Activated B cell treated with CpG ODN at 0.5 μM for 24 hours (primary cell): ENCODE measurements at regions of chr9 and their contacts with region 1.

Region 1: GRCh38 chr9:37036776-37037502 is 2.9 kb upstream of the PAX5 start:
- DNase-seq: peak; percentile 65
- ATAC-seq: peak; percentile 31
- H3K4me3 Mint-ChIP-seq: peak overlapping the region; percentile 90
- H3K27ac Mint-ChIP-seq: peak overlapping the region; percentile 96
- H3K4me1 Mint-ChIP-seq: peaks cover 65% of the 10 kb centered on the region
- H3K27me3 Mint-ChIP-seq: no peaks in the 10 kb centered on the region
- CTCF ChIP-seq: no peak

Region 2: GRCh38 chr9:36833954-36834353 is 203.0 kb before region 1 on chr9:
- CTCF ChIA-PET with region 1: no interaction called
- POLR2A ChIA-PET with region 1: no interaction called
- intact Hi-C with region 1: no loop called
- DNase-seq: peak; percentile 13
- ATAC-seq: no peak
- H3K4me3 Mint-ChIP-seq: no peak overlapping the region
- H3K27ac Mint-ChIP-seq: peak overlapping the region; percentile 86
- H3K4me1 Mint-ChIP-seq: peaks cover 67% of the 10 kb centered on the region
- H3K27me3 Mint-ChIP-seq: no peaks in the 10 kb centered on the region
- CTCF ChIP-seq: no peak

Region 3: GRCh38 chr9:37079370-37080164 is 42.6 kb after region 1 on chr9:
- CTCF ChIA-PET with region 1: no interaction called
- POLR2A ChIA-PET with region 1: interaction called, 54 read pairs
- intact Hi-C with region 1: loop called (anchors 1 kb)
- DNase-seq: peak; percentile 78
- ATAC-seq: peak; percentile 93
- H3K4me3 Mint-ChIP-seq: peak overlapping the region; percentile 94
- H3K27ac Mint-ChIP-seq: peak overlapping the region; percentile 95
- H3K4me1 Mint-ChIP-seq: peaks cover 78% of the 10 kb centered on the region
- H3K27me3 Mint-ChIP-seq: no peaks in the 10 kb centered on the region
- CTCF ChIP-seq: no peak

Region 4: DNA sequence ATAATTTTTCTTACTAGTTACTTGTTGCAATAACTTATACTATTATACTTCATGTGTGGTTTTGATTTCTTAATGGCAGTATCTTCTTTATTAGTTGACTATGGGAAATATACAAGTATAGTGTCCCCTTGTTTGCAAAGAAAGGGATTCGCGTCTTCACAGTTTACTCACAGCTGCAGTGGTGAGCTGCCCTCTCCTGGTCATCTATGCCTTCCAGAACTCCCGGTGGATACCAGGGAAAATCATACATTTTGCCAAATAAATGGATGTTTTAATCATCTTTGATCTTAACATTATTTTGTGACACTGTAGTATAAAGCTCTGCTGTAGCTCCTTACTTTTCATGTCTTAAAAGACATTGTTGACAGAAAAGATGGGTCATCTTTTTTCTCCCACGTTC is 225.5 kb after region 1 on chr9:
- CTCF ChIA-PET with region 1: no interaction called
- POLR2A ChIA-PET with region 1: interaction called, 13 read pairs
- intact Hi-C with region 1: no loop called
- DNase-seq: no peak
- ATAC-seq: no peak
- H3K4me3 Mint-ChIP-seq: no peak overlapping the region
- H3K27ac Mint-ChIP-seq: peak overlapping the region; percentile 72
- H3K4me1 Mint-ChIP-seq: peaks cover 75% of the 10 kb centered on the region
- H3K27me3 Mint-ChIP-seq: no peaks in the 10 kb centered on the region
- CTCF ChIP-seq: no peak

Region 5: DNA sequence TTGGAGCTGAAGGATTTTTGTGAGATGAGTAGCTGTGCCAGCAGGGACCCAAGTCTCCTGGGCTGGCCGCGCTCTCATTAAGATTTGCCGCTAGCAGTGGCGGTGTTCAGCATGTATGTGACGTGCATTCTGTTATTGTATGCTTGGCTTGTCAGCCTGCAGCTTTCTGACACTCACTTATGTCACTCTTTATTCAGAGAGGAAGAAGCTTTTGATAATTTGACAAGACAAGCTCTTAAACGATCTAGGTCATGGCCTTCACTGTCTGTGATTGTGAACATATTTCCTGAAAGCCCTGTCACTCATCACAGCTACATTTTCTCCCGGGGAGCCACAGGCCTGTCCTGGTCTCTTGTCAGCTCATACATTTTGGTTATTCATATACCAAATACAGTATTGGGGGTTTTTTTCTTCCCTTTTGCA is 287.3 kb after region 1 on chr9:
- CTCF ChIA-PET with region 1: interaction called, 25 read pairs
- POLR2A ChIA-PET with region 1: interaction called, 124 read pairs
- intact Hi-C with region 1: loop called (anchors 1 kb)
- DNase-seq: peak; percentile 42
- ATAC-seq: peak; percentile 86
- H3K4me3 Mint-ChIP-seq: peak overlapping the region; percentile 59
- H3K27ac Mint-ChIP-seq: peak overlapping the region; percentile 99
- H3K4me1 Mint-ChIP-seq: peaks cover 69% of the 10 kb centered on the region
- H3K27me3 Mint-ChIP-seq: no peaks in the 10 kb centered on the region
- CTCF ChIP-seq: no peak

Region 6: GRCh38 chr9:37382161-37382981 is 345.4 kb after region 1 on chr9:
- CTCF ChIA-PET with region 1: no interaction called
- POLR2A ChIA-PET with region 1: interaction called, 92 read pairs
- intact Hi-C with region 1: no loop called
- DNase-seq: no peak
- ATAC-seq: peak; percentile 23
- H3K4me3 Mint-ChIP-seq: peak overlapping the region; percentile 53
- H3K27ac Mint-ChIP-seq: peak overlapping the region; percentile 97
- H3K4me1 Mint-ChIP-seq: peaks cover 94% of the 10 kb centered on the region
- H3K27me3 Mint-ChIP-seq: no peaks in the 10 kb centered on the region
- CTCF ChIP-seq: no peak

Region 7: GRCh38 chr9:37415011-37415719 is 378.2 kb after region 1 on chr9:
- CTCF ChIA-PET with region 1: interaction called, 6 read pairs
- POLR2A ChIA-PET with region 1: interaction called, 175 read pairs
- intact Hi-C with region 1: no loop called
- DNase-seq: peak; percentile 55
- ATAC-seq: peak; percentile 77
- H3K4me3 Mint-ChIP-seq: peak overlapping the region; percentile 69
- H3K27ac Mint-ChIP-seq: peak overlapping the region; percentile 85
- H3K4me1 Mint-ChIP-seq: peaks cover 63% of the 10 kb centered on the region
- H3K27me3 Mint-ChIP-seq: no peaks in the 10 kb centered on the region
- CTCF ChIP-seq: peak; percentile 64